ENCODE measurements at regions of chr2 and their contacts with region 1.

Region 1: DNA sequence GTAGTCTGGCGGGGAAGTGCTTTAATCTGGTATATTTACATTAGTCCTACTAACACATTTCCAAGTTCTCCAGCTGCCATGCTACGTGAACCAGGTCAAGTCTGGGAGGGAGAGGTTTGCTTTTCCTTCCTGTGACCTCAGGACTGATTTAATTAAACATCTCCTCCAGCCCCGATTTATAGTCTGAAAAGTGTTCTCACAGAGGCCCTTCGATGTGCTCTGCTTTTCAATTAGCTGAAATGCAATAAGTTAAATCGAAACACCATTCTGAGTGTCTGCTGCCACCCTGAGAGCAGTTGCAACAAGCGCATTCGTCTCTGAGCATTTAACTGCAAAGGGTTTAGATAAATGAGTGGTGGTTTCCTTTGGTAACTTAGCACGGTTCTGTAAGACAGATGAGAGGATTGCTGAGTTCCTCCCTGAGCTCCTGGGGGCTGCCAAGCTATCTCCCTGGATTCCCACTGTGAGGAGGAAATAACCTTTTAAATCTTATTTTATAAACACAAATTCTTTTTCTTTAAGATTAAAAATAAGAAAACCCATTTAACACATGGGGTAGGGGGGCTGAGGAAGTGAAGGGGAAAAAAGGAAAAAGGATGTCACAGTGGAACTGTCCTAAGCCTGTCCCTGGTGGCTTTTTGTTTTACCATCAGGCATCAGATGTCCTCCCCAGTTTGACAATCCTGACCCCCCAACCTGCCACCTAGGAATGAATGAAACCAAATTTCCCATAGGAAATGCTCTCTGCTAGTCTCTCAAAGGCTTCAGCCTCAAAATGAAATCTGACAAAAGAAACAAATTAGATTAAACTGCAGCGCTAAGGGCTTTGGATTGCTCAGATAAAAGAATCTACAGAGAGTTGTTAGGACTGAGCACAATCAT is 56.5 kb upstream of the CREB1 start:
- DNase-seq: peak; percentile 51
- H3K4me3 ChIP-seq: peak overlapping the region in 1 of 2 experiments; percentile 10; a peak in 1 of 4 replicates
- H3K27ac ChIP-seq: peak overlapping the region; percentile 50 to 93; a peak in 3 of 4 replicates
- H3K4me1 ChIP-seq: peaks cover 13 to 52% of the 10 kb centered on the region in 2 experiments; a peak in 3 of 4 replicates
- H3K27me3 ChIP-seq: no peaks in the 10 kb centered on the region
- CTCF ChIP-seq: peak; percentile 89
- EP300 ChIP-seq: peak in 1 of 2 experiments; percentile 73; a peak in 1 of 4 replicates
- RAD21 ChIP-seq: peak; percentile 100

Region 2: DNA sequence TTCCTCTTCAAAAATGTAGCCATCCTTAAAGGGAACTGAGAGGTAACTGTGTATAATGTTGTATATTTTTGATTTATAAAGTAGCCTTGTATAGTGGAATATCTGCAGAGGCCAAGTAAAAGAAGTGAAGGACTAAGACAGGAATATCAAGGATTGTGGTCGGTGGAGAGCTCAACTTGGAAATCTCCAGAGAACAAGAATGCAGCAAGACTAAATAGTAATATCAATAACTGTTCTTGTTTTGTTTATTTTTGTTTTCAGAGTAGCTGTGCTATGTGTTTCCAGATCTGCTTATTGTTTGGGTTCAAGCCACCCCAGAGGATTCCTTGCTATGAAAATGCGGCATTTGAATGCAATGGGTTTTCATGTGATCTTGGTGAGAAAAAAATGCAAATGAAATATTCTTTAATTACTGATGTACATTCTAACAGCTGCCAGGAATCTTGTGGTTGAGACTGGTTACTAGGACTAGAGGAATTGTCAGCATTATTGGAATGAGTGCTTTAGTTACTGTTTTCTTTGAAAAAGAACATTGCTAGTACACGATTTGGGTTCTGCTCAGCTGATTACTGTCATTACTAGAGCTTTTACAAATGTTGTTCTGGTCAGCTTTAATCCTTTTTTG is 682.9 kb before region 1 on chr2:
- CTCF ChIA-PET with region 1: interaction called, 15 read pairs
- POLR2A ChIA-PET with region 1: no interaction called
- DNase-seq: no peak
- H3K4me3 ChIP-seq: no peak overlapping the region
- H3K27ac ChIP-seq: no peak overlapping the region
- H3K4me1 ChIP-seq: peaks cover 0 to 3% of the 10 kb centered on the region in 2 experiments; a peak in 1 of 4 replicates
- H3K27me3 ChIP-seq: no peaks in the 10 kb centered on the region
- CTCF ChIP-seq: no peak
- EP300 ChIP-seq: no peak
- RAD21 ChIP-seq: no peak

Region 3: DNA sequence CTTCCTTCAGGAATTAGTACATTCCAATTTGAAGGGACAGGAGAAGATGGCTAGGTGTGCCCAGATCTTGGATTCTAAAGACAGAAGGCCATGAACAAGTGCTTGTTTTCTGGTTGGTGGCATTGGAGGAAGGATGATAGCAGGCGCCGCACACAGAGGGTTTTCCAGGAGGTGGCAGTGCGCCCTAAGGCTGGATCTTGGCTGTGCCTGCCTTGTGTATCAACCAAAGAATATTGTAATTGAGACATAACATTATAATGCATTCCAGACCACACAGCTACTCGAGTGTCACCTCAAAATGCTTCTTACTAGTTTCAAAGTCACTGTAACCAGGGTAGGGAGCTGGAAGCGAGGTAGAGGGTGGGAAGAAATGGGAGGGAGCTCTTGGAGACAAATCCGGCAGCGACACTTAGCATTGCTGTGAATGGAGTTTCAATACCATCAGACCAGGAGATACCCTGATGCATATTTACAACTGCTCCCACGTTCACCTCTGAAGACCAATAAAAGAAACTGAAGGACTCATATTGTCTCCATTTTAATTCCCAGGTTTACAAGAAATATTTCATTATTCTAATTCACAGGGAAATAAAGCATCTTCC is 491.4 kb before region 1 on chr2:
- CTCF ChIA-PET with region 1: interaction called, 127 read pairs
- POLR2A ChIA-PET with region 1: interaction called, 3 read pairs
- DNase-seq: peak; percentile 68
- H3K4me3 ChIP-seq: no peak overlapping the region; a peak in 1 of 4 replicates
- H3K27ac ChIP-seq: peak overlapping the region in 1 of 2 experiments; percentile 91; a peak in 2 of 4 replicates
- H3K4me1 ChIP-seq: peaks cover 4 to 37% of the 10 kb centered on the region in 2 experiments; a peak in 3 of 4 replicates
- H3K27me3 ChIP-seq: no peaks in the 10 kb centered on the region
- CTCF ChIP-seq: peak; percentile 95
- EP300 ChIP-seq: peak in 1 of 2 experiments; percentile 53; a peak in 1 of 4 replicates
- RAD21 ChIP-seq: peak; percentile 99

Region 4: GRCh38 chr2:207073801-207074678 is 399.2 kb before region 1 on chr2:
- CTCF ChIA-PET with region 1: interaction called, 11 read pairs
- POLR2A ChIA-PET with region 1: no interaction called
- DNase-seq: no peak
- H3K4me3 ChIP-seq: no peak overlapping the region
- H3K27ac ChIP-seq: peak overlapping the region in 1 of 2 experiments; percentile 67; a peak in 2 of 4 replicates
- H3K4me1 ChIP-seq: peaks cover 0 to 32% of the 10 kb centered on the region in 2 experiments; a peak in 3 of 4 replicates
- H3K27me3 ChIP-seq: no peaks in the 10 kb centered on the region
- CTCF ChIP-seq: no peak
- EP300 ChIP-seq: no peak
- RAD21 ChIP-seq: peak; percentile 19; the same call in 1 of the 2 replicates

Region 5: DNA sequence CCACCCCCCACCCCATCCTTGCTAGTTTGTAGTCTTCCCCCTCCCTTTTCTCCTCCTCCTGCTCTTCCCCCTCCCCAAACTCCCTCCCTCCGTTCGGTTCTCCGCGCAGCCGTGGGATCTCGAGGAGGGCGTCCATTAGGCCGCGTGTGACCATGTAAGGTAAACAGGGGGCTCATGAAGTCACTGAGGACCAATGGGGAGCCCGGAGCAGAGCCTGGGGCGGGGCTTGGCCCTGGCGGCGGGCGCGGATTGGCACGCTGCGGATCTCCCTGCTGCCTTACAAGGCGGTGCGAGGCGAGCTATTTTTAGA is 307.3 kb before region 1 on chr2:
- CTCF ChIA-PET with region 1: interaction called, 87 read pairs
- POLR2A ChIA-PET with region 1: interaction called, 62 read pairs
- DNase-seq: peak; percentile 94
- H3K4me3 ChIP-seq: peak overlapping the region; percentile 91 to 93; a peak in 3 of 4 replicates
- H3K27ac ChIP-seq: peak overlapping the region; percentile 97 to 99
- H3K4me1 ChIP-seq: peaks cover 9 to 25% of the 10 kb centered on the region in 2 experiments; a peak in 2 of 4 replicates
- H3K27me3 ChIP-seq: no peaks in the 10 kb centered on the region
- CTCF ChIP-seq: no peak
- EP300 ChIP-seq: peak in 1 of 2 experiments; percentile 32; a peak in 1 of 4 replicates
- RAD21 ChIP-seq: no peak

Region 6: DNA sequence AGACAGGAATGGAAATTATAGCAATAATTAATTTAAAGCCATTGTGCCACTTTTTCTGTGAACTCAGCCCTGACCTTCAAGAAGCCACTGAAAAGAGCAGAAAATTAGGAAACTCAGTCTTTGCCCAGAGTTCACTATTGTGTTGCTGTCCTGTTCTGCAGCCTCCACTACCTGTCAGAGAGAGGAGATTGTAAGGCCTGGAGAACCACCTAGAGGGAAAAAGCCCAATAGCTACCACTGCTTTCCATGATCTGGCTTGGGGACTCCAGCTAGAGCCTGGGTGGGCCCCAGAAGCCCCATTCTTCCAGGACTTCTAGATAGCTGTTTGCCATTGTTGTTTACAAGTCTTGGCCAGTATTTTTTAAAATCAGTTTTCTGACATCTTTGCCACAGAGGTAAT is 131.5 kb before region 1 on chr2:
- CTCF ChIA-PET with region 1: interaction called, 13 read pairs
- POLR2A ChIA-PET with region 1: interaction called, 3 read pairs
- DNase-seq: no peak
- H3K4me3 ChIP-seq: no peak overlapping the region
- H3K27ac ChIP-seq: peak overlapping the region in 1 of 2 experiments; percentile 72; a peak in 2 of 4 replicates
- H3K4me1 ChIP-seq: peaks cover 0 to 21% of the 10 kb centered on the region in 2 experiments; a peak in 3 of 4 replicates
- H3K27me3 ChIP-seq: no peaks in the 10 kb centered on the region
- CTCF ChIP-seq: no peak
- EP300 ChIP-seq: no peak
- RAD21 ChIP-seq: peak; percentile 48

Region 7: GRCh38 chr2:207448006-207448405 is 25.3 kb before region 1 on chr2:
- CTCF ChIA-PET with region 1: interaction called, 14 read pairs
- POLR2A ChIA-PET with region 1: interaction called, 3 read pairs
- DNase-seq: no peak
- H3K4me3 ChIP-seq: no peak overlapping the region
- H3K27ac ChIP-seq: no peak overlapping the region
- H3K4me1 ChIP-seq: peaks cover 8 to 17% of the 10 kb centered on the region in 2 experiments; a peak in 3 of 4 replicates
- H3K27me3 ChIP-seq: no peaks in the 10 kb centered on the region
- CTCF ChIP-seq: no peak
- EP300 ChIP-seq: no peak
- RAD21 ChIP-seq: no peak